ENCODE measurements at regions of chr6 and their contacts with region 1.

Region 1: DNA sequence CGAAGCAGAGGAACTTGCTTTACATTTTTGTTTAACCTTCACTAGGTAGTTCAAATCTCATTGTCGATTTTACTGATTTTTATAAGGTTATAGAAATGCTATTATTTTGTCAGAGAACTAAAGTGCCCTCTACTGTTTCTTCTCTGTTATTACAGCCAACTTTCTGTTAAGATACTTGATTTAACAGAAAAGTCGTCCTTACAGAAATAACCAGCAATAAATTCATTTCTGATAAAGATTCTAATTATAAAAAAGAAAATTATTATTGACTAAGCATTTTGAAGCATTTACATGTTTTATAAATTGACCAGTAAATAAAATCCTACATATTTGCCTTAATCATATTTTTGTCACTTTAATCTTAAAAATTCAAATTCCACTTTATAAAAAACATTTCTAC is 60.8 kb downstream of the OGFRL1 start:
- DNase-seq: no peak

Region 2: GRCh38 chr6:70099732-70100131 is 1249.7 kb before region 1 on chr6:
- intact Hi-C with region 1: no loop called
- DNase-seq: no peak

Region 3: DNA sequence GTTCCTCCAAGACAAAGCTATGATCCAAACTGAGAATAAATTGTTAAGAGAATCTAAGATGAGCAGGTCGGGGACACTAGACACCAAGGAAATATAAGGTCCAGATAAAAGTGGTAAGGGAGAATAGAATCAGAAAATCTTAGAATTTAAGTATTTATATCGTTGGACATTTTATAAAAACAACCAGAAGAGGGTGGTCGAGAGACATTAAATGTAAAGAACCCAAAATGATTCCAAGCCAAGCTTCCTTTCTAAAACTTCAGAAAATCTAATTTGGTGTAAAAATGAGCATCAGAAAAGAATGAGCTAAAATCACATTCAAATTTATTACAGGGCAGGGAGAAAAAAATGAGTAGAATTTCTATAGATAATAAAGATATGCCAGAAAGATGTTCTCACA is 158.6 kb before region 1 on chr6:
- intact Hi-C with region 1: loop called (anchors 5 kb)
- DNase-seq: no peak

Region 4: DNA sequence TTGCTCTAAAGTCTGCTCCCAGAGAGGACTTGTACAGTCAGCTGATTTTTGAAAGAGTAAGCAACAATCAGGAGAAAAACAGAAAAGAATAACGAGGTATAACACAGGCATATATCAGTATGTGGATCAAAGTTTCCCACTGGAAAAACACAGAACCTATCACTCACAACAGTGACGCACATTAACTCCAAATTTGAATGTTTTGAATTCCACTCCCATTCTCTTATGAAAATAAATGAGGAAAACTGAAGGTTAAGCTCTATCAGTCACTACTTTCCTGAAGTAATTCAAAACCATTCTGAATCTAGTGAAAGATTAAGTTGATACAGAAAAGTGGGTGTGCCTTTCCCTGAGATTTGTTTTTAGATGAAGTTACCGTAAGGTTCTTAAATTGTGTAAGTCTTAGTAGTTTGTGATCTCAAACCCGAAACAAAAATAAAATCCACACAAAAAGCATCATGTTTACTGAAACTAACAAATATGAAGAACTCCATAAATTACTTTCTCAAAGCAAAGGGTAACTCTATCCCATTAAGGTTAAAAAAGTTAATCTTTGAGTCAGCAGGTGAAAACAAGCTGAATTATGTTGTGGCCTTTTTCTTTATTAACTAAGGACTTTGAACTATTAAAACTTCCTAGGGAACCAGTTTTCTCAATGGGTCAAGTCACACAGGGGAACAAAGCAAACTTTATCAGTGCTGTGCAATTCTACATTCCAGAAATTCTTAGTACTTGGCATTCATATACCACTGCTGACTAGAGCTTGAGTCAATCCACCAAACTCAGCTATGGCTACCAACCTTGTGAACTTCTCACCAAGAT is 55.0 kb after region 1 on chr6:
- intact Hi-C with region 1: no loop called
- DNase-seq: no peak

Measured in posterior cingulate gyrus (tissue), 11 donors.